Activated B cell treated with CpG ODN at 0.5 μM for 24 hours (primary cell): ENCODE measurements at regions of chr9 and their contacts with region 1.

Region 1: DNA sequence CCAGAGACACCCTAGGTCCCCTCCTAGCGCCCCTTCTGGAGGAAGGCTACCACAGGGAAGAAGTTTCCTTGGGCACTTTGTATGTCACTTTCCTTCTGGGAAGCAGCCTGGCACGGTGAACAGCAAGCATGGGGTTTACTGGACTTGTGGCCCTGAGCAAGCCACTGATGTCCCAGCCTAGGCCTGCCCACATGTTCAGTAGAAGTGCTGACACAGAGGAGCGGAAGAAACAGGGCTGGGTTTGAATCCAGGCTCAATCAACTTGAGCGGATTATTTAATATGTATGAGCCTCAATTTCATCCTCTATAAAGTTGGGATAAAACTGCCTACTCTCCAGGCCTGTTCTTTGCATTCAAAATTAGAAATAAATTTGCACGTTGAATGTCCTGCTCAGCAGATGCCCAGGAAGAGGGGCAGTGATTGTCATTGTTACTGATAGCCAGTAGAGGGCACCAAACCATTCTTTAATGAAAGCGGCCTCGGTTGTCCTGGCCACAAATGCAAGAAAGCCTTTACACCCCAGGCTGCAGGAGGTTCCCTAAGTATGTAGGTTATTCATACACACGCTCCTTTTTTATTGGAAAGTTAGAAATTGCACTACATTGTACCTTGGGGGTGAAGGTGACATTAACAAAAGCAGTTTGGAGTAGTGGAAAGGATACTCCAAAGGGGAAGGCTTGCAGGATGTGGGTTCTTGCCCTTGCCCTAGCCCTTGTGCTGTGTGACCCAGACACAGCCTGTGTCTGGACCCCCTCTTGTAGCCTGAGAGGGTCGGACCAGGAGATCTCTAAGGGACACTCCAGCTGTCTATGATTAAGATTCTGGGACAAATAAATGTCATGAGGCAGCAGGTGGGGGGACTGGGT is 13.4 kb upstream of the XPA start:
- DNase-seq: no peak
- ATAC-seq: peak; percentile 83
- H3K4me3 Mint-ChIP-seq: no peak overlapping the region
- H3K27ac Mint-ChIP-seq: no peak overlapping the region
- H3K4me1 Mint-ChIP-seq: no peaks in the 10 kb centered on the region
- H3K27me3 Mint-ChIP-seq: peaks cover 37% of the 10 kb centered on the region
- CTCF ChIP-seq: peak; percentile 49

Region 2: GRCh38 chr9:97628668-97629067 is 81.9 kb before region 1 on chr9:
- CTCF ChIA-PET with region 1: no interaction called
- POLR2A ChIA-PET with region 1: no interaction called
- intact Hi-C with region 1: no loop called
- DNase-seq: no peak
- ATAC-seq: no peak
- H3K4me3 Mint-ChIP-seq: no peak overlapping the region
- H3K27ac Mint-ChIP-seq: no peak overlapping the region
- H3K4me1 Mint-ChIP-seq: peaks cover 14% of the 10 kb centered on the region
- H3K27me3 Mint-ChIP-seq: no peaks in the 10 kb centered on the region
- CTCF ChIP-seq: no peak

Region 3: GRCh38 chr9:97675655-97676054 is 34.9 kb before region 1 on chr9:
- CTCF ChIA-PET with region 1: no interaction called
- POLR2A ChIA-PET with region 1: no interaction called
- intact Hi-C with region 1: no loop called
- DNase-seq: no peak
- ATAC-seq: no peak
- H3K4me3 Mint-ChIP-seq: no peak overlapping the region
- H3K27ac Mint-ChIP-seq: no peak overlapping the region
- H3K4me1 Mint-ChIP-seq: no peaks in the 10 kb centered on the region
- H3K27me3 Mint-ChIP-seq: no peaks in the 10 kb centered on the region
- CTCF ChIP-seq: no peak

Region 4: GRCh38 chr9:97696803-97697601 is 13.6 kb before region 1 on chr9 and contains the start of gene XPA:
- CTCF ChIA-PET with region 1: no interaction called
- POLR2A ChIA-PET with region 1: interaction called, 3 read pairs
- intact Hi-C with region 1: loop called (anchors 1 kb)
- DNase-seq: peak; percentile 96
- ATAC-seq: peak; percentile 93
- H3K4me3 Mint-ChIP-seq: peak within 1 kb of the TSS; percentile 90
- H3K27ac Mint-ChIP-seq: peak within 1 kb of the TSS; percentile 94
- H3K4me1 Mint-ChIP-seq: peaks cover 60% of the 10 kb centered on the region
- H3K27me3 Mint-ChIP-seq: peaks cover 5% of the 10 kb centered on the region
- CTCF ChIP-seq: no peak
- total RNA-seq, gene XPA: 14.4 and 18.1 TPM in 2 replicates

Region 5: GRCh38 chr9:97853844-97854695 is 143.5 kb after region 1 on chr9:
- CTCF ChIA-PET with region 1: no interaction called
- POLR2A ChIA-PET with region 1: no interaction called
- intact Hi-C with region 1: loop called (anchors 5 kb)
- DNase-seq: peak; percentile 49
- ATAC-seq: peak; percentile 81
- H3K4me3 Mint-ChIP-seq: peak overlapping the region; percentile 85
- H3K27ac Mint-ChIP-seq: no peak overlapping the region
- H3K4me1 Mint-ChIP-seq: peaks cover 25% of the 10 kb centered on the region
- H3K27me3 Mint-ChIP-seq: peaks cover 62% of the 10 kb centered on the region
- CTCF ChIP-seq: no peak

Region 6: DNA sequence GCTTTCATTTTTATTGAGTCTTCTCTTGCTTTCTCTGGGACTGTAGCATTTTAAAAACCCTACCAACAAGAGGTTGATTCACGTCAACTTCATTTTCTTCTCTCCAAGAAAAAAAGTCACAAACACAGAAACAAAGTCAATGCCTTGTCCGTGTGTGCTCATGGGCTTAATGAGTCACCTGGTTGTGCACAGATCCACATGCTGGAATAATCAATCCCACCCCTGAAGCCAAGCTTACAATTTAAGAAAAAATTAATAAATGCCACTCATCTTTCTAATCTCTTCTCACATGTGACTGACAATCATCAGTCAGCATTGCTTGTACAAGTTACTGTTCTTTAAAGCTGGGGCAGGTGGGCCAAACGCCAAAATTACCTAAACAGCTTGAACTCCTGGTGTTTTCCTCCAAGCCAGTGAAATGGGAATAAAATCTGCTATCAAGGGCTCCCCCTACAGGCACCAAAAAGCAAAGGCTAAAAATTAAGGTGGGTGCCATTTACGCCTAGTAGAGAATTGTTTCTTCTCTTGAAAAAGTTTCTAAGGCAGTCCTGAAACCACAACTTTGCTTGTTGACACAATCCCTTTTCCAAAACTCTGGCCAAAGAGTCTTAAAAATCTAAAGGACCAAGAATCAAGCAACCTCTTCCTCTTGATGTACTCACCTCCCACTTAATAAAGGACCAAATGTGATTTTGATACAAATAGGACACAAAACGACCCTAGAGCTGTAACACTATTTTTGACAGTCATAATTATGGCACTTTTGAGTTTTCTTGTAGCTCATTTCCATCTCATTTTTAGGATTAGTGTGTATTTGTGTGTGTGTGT is 190.4 kb after region 1 on chr9:
- CTCF ChIA-PET with region 1: interaction called, 7 read pairs
- POLR2A ChIA-PET with region 1: no interaction called
- intact Hi-C with region 1: loop called (anchors 1 kb)
- DNase-seq: no peak
- ATAC-seq: no peak
- H3K4me3 Mint-ChIP-seq: no peak overlapping the region
- H3K27ac Mint-ChIP-seq: no peak overlapping the region
- H3K4me1 Mint-ChIP-seq: peaks cover 21% of the 10 kb centered on the region
- H3K27me3 Mint-ChIP-seq: no peaks in the 10 kb centered on the region
- CTCF ChIP-seq: no peak

Region 7: GRCh38 chr9:97954550-97954989 is 244.0 kb after region 1 on chr9:
- CTCF ChIA-PET with region 1: no interaction called
- POLR2A ChIA-PET with region 1: no interaction called
- intact Hi-C with region 1: loop called (anchors 1 kb)
- DNase-seq: no peak
- ATAC-seq: peak; percentile 82
- H3K4me3 Mint-ChIP-seq: no peak overlapping the region
- H3K27ac Mint-ChIP-seq: no peak overlapping the region
- H3K4me1 Mint-ChIP-seq: no peaks in the 10 kb centered on the region
- H3K27me3 Mint-ChIP-seq: peaks cover 9% of the 10 kb centered on the region
- CTCF ChIP-seq: no peak

Region 8: DNA sequence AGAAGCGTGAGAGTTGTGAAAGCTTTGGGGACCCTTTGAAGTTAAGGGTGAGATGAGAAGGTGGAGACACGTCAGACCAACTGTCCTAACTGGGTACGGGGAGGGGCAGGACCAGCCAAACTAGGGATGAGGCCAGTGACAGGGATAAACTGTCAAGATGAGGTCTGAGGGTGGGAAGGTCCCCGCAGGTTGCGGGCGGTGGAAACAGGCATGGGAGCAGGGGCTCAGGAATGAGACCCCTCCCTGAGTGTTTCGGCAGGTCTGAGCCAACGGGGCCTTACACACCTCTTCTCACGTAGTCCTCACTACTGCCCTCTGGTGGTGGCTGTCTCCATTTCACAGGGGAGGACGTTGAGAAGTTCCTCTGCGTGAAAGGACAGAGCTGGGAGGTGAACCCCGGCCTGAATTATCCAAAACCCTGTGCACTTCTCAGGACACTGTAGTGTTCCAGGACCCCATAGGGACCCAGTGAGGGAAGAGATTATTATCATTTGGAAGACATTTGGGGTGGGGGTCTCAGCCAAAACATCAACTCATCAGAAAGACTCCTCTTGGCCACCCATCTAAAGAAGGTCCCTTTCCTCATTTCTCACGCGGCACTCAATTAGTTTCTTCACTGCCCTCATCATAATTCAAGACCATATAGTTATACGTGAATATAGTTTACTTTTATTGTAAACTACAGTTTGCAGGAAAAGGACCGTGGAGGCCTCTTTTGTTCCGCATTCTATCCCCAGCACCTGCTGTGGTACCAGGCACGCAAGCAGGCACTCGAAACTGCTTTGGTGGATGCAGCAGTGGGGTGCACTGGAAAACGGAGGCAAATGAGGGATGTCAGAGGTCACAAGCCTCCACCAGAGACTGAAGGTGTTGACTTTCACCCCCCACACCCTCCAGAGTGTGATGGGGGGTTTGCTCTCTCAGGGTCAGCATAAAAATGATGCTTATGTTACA is 324.3 kb after region 1 on chr9:
- CTCF ChIA-PET with region 1: no interaction called
- POLR2A ChIA-PET with region 1: no interaction called
- intact Hi-C with region 1: loop called (anchors 1 kb)
- DNase-seq: peak; percentile 73
- ATAC-seq: peak; percentile 89
- H3K4me3 Mint-ChIP-seq: peak overlapping the region; percentile 1
- H3K27ac Mint-ChIP-seq: peak overlapping the region; percentile 36
- H3K4me1 Mint-ChIP-seq: peaks cover 47% of the 10 kb centered on the region
- H3K27me3 Mint-ChIP-seq: no peaks in the 10 kb centered on the region
- CTCF ChIP-seq: no peak

Region 9: DNA sequence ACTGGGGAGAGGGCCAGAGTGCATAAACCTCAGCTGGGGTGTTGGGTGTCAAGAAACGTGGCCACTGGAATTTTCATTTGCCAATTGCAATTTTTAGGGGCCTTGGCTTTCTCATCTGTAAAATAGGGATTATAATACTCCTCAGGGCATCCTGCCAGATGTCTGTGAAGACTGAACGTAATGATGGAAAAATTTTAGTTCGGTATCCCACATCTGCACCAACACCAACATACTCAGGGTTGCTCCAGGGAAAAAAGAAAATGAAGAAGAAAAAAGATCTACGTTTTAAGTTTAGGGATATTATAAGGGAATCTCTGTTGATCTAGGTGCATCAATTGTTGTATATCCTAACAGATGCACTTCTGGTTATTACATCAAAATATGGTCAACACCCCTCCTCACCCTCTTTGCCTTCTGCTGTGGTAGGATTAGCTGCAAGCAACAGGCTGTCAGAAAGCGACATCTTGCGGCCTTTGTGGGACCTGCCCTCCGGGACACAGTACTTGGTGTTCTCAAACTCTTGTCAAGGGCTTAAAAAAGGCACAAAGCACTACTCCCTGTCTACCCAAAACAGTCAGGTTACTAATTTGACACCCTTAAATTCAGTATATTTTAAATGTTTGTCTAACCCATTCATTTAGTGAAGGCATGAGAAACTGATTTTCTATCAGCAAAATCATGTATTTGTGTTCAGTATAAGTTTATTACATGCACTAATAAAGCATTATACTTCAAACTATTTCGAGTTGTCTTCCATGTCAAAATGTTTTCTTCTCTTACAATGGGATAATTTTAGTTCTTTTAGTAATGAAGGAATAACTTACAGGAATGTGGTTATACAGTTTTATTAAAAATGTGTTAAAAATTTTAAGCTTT is 553.1 kb after region 1 on chr9:
- CTCF ChIA-PET with region 1: no interaction called
- POLR2A ChIA-PET with region 1: no interaction called
- intact Hi-C with region 1: loop called (anchors 1 kb)
- DNase-seq: peak; percentile 58
- ATAC-seq: peak; percentile 100
- H3K4me3 Mint-ChIP-seq: no peak overlapping the region
- H3K27ac Mint-ChIP-seq: no peak overlapping the region
- H3K4me1 Mint-ChIP-seq: no peaks in the 10 kb centered on the region
- H3K27me3 Mint-ChIP-seq: peaks cover 5% of the 10 kb centered on the region
- CTCF ChIP-seq: peak; percentile 86